OCI-LY7 (cell line): ENCODE measurements at regions of chr7 and their contacts with region 1.

Region 1: GRCh38 chr7:36152756-36153570 is at the start of gene EEPD1:
- DNase-seq: peak; percentile 97
- H3K4me3 ChIP-seq: peak within 1 kb of the TSS; percentile 76
- H3K27ac ChIP-seq: no peak within 1 kb of the TSS
- H3K4me1 ChIP-seq: peaks cover 25% of the 10 kb centered on the region
- CTCF ChIP-seq: no peak
- total RNA-seq, gene EEPD1: 1.7 and 5.1 TPM in 2 replicates

Region 2: GRCh38 chr7:36171503-36171902 is 18.5 kb after region 1 on chr7:
- CTCF ChIA-PET with region 1: no interaction called
- POLR2A ChIA-PET with region 1: interaction called, 15 read pairs
- intact Hi-C with region 1: no loop called
- DNase-seq: no peak
- H3K4me3 ChIP-seq: no peak overlapping the region
- H3K27ac ChIP-seq: no peak overlapping the region
- H3K4me1 ChIP-seq: peaks cover 6% of the 10 kb centered on the region
- CTCF ChIP-seq: no peak

Region 3: GRCh38 chr7:36389371-36390198 is 236.6 kb after region 1 on chr7 and contains the start of gene ANLN:
- CTCF ChIA-PET with region 1: no interaction called
- POLR2A ChIA-PET with region 1: no interaction called
- intact Hi-C with region 1: loop called (anchors 2 kb)
- DNase-seq: peak; percentile 92
- H3K4me3 ChIP-seq: peak within 1 kb of the TSS; percentile 85
- H3K27ac ChIP-seq: peak within 1 kb of the TSS; percentile 82
- H3K4me1 ChIP-seq: peaks cover 32% of the 10 kb centered on the region
- CTCF ChIP-seq: no peak
- total RNA-seq, gene ANLN: 47.3 and 56.5 TPM in 2 replicates